Endothelial cell of umbilical vein (primary cell): ENCODE measurements at regions of chr2 and their contacts with region 1.

Region 1: GRCh38 chr2:73408198-73408597 is 22.6 kb downstream of the ALMS1 start:
- DNase-seq: no peak
- H3K4me3 ChIP-seq: no peak overlapping the region
- H3K27ac ChIP-seq: no peak overlapping the region
- H3K4me1 ChIP-seq: no peaks in the 10 kb centered on the region
- H3K27me3 ChIP-seq: no peaks in the 10 kb centered on the region
- CTCF ChIP-seq: no peak
- POLR2A ChIP-seq: no peak

Region 2: DNA sequence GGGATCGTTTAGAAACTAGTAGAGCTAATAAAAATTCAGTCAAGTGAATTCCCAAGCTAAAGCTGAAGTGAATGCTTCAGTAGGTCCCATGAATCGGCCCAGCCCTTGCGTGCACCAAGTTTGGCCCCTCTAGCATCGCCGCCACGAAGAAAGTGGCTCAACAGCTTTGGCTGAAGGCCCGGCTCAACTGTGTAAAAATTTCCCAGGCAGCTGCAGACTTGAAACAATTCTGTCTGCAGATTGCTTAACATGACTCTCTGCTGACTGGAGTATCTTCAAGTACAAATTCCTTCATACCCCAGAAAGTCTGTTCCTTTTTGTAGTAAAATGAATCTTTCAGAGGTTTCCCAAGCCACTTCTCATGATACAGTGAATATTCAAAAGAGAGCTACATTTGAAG is 10.1 kb after region 1 on chr2:
- CTCF ChIA-PET with region 1: interaction called, 11 read pairs
- POLR2A ChIA-PET with region 1: no interaction called
- dilution Hi-C with region 1: no loop called
- intact Hi-C with region 1: no loop called
- DNase-seq: no peak
- H3K4me3 ChIP-seq: no peak overlapping the region
- H3K27ac ChIP-seq: no peak overlapping the region
- H3K4me1 ChIP-seq: no peaks in the 10 kb centered on the region
- H3K27me3 ChIP-seq: no peaks in the 10 kb centered on the region
- CTCF ChIP-seq: no peak
- POLR2A ChIP-seq: no peak